WTC11 (cell line): ENCODE measurements at regions of chr9 and their contacts with region 1.

Region 1: GRCh38 chr9:34646211-34647083 is at the start of gene GALT:
- DNase-seq: peak; percentile 95
- ATAC-seq: peak; percentile 87
- H3K4me3 Mint-ChIP-seq: peak within 1 kb of the TSS; percentile 85
- H3K27ac Mint-ChIP-seq: peak within 1 kb of the TSS; percentile 76
- H3K4me1 Mint-ChIP-seq: peaks cover 34% of the 10 kb centered on the region
- H3K27me3 Mint-ChIP-seq: no peaks in the 10 kb centered on the region
- CTCF ChIP-seq: no peak
- total RNA-seq, gene GALT: 35.9 to 39.7 TPM (median 37.6 TPM) in 3 replicates

Region 2: GRCh38 chr9:34659592-34660535 is 13.4 kb after region 1 on chr9:
- CTCF ChIA-PET with region 1: interaction called, 56 read pairs
- POLR2A ChIA-PET with region 1: interaction called, 11 read pairs
- DNase-seq: no peak
- ATAC-seq: 0 out of 2 replicates have a peak, but pooled peaks have one; percentile 4
- H3K4me3 Mint-ChIP-seq: no peak overlapping the region
- H3K27ac Mint-ChIP-seq: no peak overlapping the region
- H3K4me1 Mint-ChIP-seq: peaks cover 12% of the 10 kb centered on the region
- H3K27me3 Mint-ChIP-seq: peaks cover 6% of the 10 kb centered on the region
- CTCF ChIP-seq: no peak